ENCODE measurements at regions of chr17 and their contacts with region 1.

Region 1: DNA sequence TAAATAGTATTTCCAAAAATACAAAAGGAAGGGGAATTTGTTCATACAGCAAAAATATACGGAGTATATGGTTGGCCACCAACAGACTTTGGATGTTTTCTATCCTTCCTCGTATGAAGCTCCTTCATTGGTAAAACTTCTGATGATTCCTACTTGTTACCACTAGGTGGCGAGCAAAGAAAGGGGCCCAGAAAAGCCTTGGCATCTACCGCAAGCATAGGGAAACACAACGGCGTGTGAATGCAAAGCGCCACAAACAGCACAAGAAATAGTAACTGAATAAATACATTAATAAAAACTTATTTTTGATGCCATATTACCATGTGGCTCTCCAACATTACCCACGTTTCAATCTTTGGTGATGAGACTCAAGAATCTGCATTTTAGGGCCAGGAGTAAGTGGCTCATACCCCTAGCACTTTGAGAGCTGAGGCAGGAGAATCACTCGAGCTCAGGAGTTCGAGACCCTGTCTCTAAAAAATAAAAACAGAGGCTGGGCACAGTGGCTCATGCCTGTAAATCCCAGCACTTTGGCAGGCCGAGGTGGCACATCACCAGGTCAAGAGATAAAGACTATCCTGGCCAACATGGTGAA is 34.5 kb downstream of the YWHAE start:
- DNase-seq: peak; percentile 72
- ATAC-seq: peak; percentile 61
- H3K4me3 Mint-ChIP-seq: no peak overlapping the region
- H3K27ac Mint-ChIP-seq: peak overlapping the region; percentile 46
- H3K4me1 Mint-ChIP-seq: peaks cover 62% of the 10 kb centered on the region
- H3K27me3 Mint-ChIP-seq: no peaks in the 10 kb centered on the region
- CTCF ChIP-seq: peak; percentile 91

Region 2: GRCh38 chr17:1251866-1252608 is 113.5 kb before region 1 on chr17:
- CTCF ChIA-PET with region 1: no interaction called
- POLR2A ChIA-PET with region 1: no interaction called
- intact Hi-C with region 1: no loop called
- DNase-seq: no peak
- ATAC-seq: no peak
- H3K4me3 Mint-ChIP-seq: no peak overlapping the region
- H3K27ac Mint-ChIP-seq: no peak overlapping the region
- H3K4me1 Mint-ChIP-seq: peaks cover 8% of the 10 kb centered on the region
- H3K27me3 Mint-ChIP-seq: peaks cover 12% of the 10 kb centered on the region
- CTCF ChIP-seq: no peak

Region 3: GRCh38 chr17:1347589-1348323 is 17.8 kb before region 1 on chr17:
- CTCF ChIA-PET with region 1: interaction called, 32 read pairs
- POLR2A ChIA-PET with region 1: interaction called, 12 read pairs
- intact Hi-C with region 1: no loop called
- DNase-seq: no peak
- ATAC-seq: no peak
- H3K4me3 Mint-ChIP-seq: no peak overlapping the region
- H3K27ac Mint-ChIP-seq: peak overlapping the region; percentile 81
- H3K4me1 Mint-ChIP-seq: peaks cover 41% of the 10 kb centered on the region
- H3K27me3 Mint-ChIP-seq: no peaks in the 10 kb centered on the region
- CTCF ChIP-seq: no peak

Region 4: GRCh38 chr17:1390433-1391367 is 25.2 kb after region 1 on chr17:
- CTCF ChIA-PET with region 1: interaction called, 51 read pairs
- POLR2A ChIA-PET with region 1: interaction called, 17 read pairs
- intact Hi-C with region 1: no loop called
- DNase-seq: no peak
- ATAC-seq: no peak
- H3K4me3 Mint-ChIP-seq: no peak overlapping the region
- H3K27ac Mint-ChIP-seq: peak overlapping the region; percentile 51
- H3K4me1 Mint-ChIP-seq: peaks cover 74% of the 10 kb centered on the region
- H3K27me3 Mint-ChIP-seq: no peaks in the 10 kb centered on the region
- CTCF ChIP-seq: no peak

Region 5: GRCh38 chr17:1413281-1413791 is 47.8 kb after region 1 on chr17:
- CTCF ChIA-PET with region 1: interaction called, 12 read pairs
- POLR2A ChIA-PET with region 1: no interaction called
- intact Hi-C with region 1: no loop called
- DNase-seq: no peak
- ATAC-seq: no peak
- H3K4me3 Mint-ChIP-seq: no peak overlapping the region
- H3K27ac Mint-ChIP-seq: no peak overlapping the region
- H3K4me1 Mint-ChIP-seq: no peaks in the 10 kb centered on the region
- H3K27me3 Mint-ChIP-seq: no peaks in the 10 kb centered on the region
- CTCF ChIP-seq: no peak

Region 6: DNA sequence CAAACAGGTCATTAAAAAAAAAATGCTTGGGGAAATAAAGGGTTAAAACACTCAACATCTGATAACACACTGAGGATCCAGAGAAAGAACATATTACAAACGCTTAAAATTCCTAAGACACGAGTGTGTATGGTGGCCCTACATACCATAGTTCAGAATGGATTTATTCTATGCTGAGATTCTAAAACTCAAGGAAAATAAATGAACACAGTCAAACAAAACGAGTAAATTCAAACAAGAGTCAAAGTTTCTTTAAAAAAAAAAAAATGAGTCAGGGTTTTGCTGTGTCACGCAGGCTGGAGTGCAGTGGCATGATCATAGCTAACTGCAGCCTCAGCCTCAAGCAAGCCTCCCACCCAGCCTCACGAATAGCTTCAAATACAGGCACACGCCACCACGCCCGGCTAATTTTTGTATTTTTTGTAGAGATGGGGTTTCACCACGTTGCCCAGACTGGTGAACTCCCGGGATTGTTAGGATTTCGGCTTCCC is 73.1 kb after region 1 on chr17:
- CTCF ChIA-PET with region 1: interaction called, 15 read pairs
- POLR2A ChIA-PET with region 1: no interaction called
- intact Hi-C with region 1: no loop called
- DNase-seq: no peak
- ATAC-seq: no peak
- H3K4me3 Mint-ChIP-seq: no peak overlapping the region
- H3K27ac Mint-ChIP-seq: no peak overlapping the region
- H3K4me1 Mint-ChIP-seq: peaks cover 6% of the 10 kb centered on the region
- H3K27me3 Mint-ChIP-seq: no peaks in the 10 kb centered on the region
- CTCF ChIP-seq: no peak

Region 7: DNA sequence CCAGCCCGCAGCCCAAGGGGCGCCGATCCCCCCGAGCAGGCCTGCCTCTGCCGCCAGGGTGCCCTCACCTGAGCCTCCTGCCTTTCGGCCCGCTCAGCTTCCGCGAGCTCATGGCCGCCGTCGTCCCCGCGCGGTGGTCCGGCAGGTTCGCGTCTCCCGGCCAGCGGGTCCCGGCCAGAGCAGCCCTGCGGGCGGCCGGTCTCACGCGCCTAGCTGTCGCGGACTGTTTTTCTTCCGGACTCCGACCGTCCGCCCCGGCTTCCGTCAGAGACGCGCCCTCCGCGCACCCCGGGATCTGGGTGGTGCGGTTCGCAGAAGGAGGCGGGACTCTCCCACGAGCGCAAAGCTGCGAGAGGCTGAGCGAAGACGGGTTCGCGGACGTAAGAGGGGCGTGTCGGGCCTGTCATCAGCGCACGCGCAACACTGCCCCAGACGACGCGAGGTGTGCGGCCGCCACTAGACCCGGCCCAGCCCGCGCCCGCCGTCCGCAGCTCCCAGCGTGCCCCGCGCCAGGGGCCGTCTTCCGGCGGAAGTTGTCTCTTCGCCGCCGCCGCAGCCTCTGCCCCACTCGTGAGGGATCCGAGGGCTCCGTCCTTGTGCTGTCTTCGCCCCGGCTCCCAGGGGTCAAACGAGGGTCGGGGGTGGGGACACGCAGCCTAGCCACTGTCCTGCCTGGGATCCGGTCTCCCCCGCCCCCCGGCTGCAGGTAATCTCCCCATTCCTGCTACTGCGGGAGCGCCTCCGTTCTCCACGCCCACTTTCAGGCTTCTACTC is 151.0 kb after region 1 on chr17 and contains the start of gene INPP5K:
- CTCF ChIA-PET with region 1: interaction called, 49 read pairs
- POLR2A ChIA-PET with region 1: interaction called, 8 read pairs
- intact Hi-C with region 1: loop called (anchors 5 kb)
- DNase-seq: peak; percentile 98
- ATAC-seq: peak; percentile 99
- H3K4me3 Mint-ChIP-seq: peak within 1 kb of the TSS; percentile 85
- H3K27ac Mint-ChIP-seq: peak within 1 kb of the TSS; percentile 82
- H3K4me1 Mint-ChIP-seq: peaks cover 24% of the 10 kb centered on the region
- H3K27me3 Mint-ChIP-seq: no peaks in the 10 kb centered on the region
- CTCF ChIP-seq: no peak
- total RNA-seq, gene INPP5K: 16.5 to 16.7 TPM

Measured in activated CD8-positive, alpha-beta T cell treated with anti-CD3 and anti-CD28 coated beads for 36 hours (primary cell).